Activated B cell treated with CpG ODN at 0.5 μM for 24 hours (primary cell): ENCODE measurements at regions of chr19 and their contacts with region 1.

Region 1: DNA sequence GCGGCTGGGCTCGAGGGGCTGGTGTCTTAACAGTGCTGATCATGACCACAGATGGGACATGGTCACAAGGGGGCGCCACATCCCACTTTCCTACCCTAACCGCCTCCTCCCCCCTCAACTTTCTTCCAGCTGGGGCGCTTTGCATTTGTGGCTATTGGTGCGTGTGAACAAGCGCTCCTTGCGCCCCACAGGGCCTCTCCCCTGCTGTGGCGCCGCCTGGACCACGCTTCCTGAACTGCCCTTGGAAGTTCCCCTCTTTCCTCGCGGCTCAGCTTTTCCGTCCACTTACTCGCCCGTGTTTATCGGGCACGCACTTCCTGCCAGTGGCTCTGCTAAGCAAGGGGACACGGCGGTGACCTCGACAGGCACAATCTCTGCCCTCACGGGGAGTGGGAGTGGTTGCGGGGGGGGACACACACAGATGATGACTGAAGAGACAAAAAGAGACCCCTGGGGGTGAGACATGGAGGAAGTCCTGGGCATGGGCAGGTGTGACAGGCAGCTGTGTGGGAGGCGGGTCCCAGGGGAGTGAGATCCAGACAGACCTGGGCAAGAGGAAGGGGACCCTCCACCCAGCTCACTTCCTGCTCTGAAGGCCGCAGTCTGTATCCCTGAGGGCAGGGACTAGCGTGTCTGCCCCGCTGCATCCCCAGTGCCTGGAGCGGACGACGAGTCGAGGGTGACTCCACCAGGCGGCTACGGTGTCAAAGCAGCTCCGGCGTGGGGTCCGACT is 40.3 kb downstream of the ZNF787 start:
- DNase-seq: peak; percentile 70
- ATAC-seq: peak; percentile 82
- H3K4me3 Mint-ChIP-seq: peak overlapping the region; percentile 84
- H3K27ac Mint-ChIP-seq: peak overlapping the region; percentile 55
- H3K4me1 Mint-ChIP-seq: peaks cover 17% of the 10 kb centered on the region
- H3K27me3 Mint-ChIP-seq: no peaks in the 10 kb centered on the region
- CTCF ChIP-seq: no peak

Region 2: GRCh38 chr19:55766466-55766865 is 314.4 kb before region 1 on chr19:
- CTCF ChIA-PET with region 1: no interaction called
- POLR2A ChIA-PET with region 1: no interaction called
- intact Hi-C with region 1: no loop called
- DNase-seq: no peak
- ATAC-seq: no peak
- H3K4me3 Mint-ChIP-seq: no peak overlapping the region
- H3K27ac Mint-ChIP-seq: no peak overlapping the region
- H3K4me1 Mint-ChIP-seq: no peaks in the 10 kb centered on the region
- H3K27me3 Mint-ChIP-seq: peaks cover 22% of the 10 kb centered on the region
- CTCF ChIP-seq: no peak

Region 3: DNA sequence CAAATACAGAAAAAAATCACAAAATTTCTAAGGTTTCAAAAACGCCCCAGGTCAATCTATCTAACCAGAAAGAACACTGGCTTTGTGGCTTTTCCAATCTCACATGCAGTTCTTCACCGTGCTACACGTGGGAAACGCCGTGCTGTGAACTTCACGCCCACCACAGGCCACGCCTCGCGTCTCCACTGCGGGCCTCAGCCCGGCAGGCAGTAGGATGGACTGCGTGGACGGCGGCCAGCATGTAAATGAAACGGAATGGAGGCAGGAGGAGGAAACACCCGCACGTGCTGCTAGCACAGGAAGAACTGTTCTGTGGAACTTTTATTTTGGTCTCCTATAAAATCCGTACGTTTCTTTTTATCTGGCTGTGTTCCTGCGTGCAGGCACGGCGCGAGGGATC is 16.5 kb after region 1 on chr19:
- CTCF ChIA-PET with region 1: no interaction called
- POLR2A ChIA-PET with region 1: no interaction called
- intact Hi-C with region 1: no loop called
- DNase-seq: no peak
- ATAC-seq: no peak
- H3K4me3 Mint-ChIP-seq: no peak overlapping the region
- H3K27ac Mint-ChIP-seq: no peak overlapping the region
- H3K4me1 Mint-ChIP-seq: no peaks in the 10 kb centered on the region
- H3K27me3 Mint-ChIP-seq: no peaks in the 10 kb centered on the region
- CTCF ChIP-seq: no peak

Region 4: GRCh38 chr19:56111601-56112312 is 30.9 kb after region 1 on chr19:
- CTCF ChIA-PET with region 1: no interaction called
- POLR2A ChIA-PET with region 1: no interaction called
- intact Hi-C with region 1: loop called (anchors 2 kb)
- DNase-seq: peak; percentile 61
- ATAC-seq: peak; percentile 96
- H3K4me3 Mint-ChIP-seq: peak overlapping the region; percentile 77
- H3K27ac Mint-ChIP-seq: peak overlapping the region; percentile 84
- H3K4me1 Mint-ChIP-seq: peaks cover 83% of the 10 kb centered on the region
- H3K27me3 Mint-ChIP-seq: no peaks in the 10 kb centered on the region
- CTCF ChIP-seq: no peak

Region 5: DNA sequence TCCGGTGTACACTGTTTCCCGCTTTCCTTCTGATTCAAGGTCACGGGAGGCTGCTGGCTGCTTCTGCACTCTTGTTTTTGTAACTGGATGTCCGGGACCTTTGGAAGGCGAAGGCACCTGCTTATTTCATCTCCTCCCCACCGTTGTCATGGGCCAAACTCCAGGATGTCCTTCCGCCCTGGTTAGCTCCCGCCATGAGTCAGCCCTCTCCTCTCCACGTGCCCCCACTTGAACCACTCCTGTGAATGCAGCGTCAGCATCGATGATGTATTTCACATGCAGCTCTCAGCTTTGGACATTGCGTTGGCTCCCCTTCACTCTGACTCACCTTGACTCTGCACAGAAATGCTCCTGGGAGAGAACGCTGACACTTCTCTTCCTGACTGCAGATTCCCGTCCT is 89.4 kb after region 1 on chr19:
- CTCF ChIA-PET with region 1: interaction called, 29 read pairs
- POLR2A ChIA-PET with region 1: no interaction called
- intact Hi-C with region 1: loop called (anchors 1 kb)
- DNase-seq: no peak
- ATAC-seq: no peak
- H3K4me3 Mint-ChIP-seq: no peak overlapping the region
- H3K27ac Mint-ChIP-seq: no peak overlapping the region
- H3K4me1 Mint-ChIP-seq: peaks cover 2% of the 10 kb centered on the region
- H3K27me3 Mint-ChIP-seq: peaks cover 3% of the 10 kb centered on the region
- CTCF ChIP-seq: no peak

Region 6: GRCh38 chr19:56333505-56333904 is 252.7 kb after region 1 on chr19:
- CTCF ChIA-PET with region 1: interaction called, 33 read pairs
- POLR2A ChIA-PET with region 1: no interaction called
- intact Hi-C with region 1: loop called (anchors 1 kb)
- DNase-seq: no peak
- ATAC-seq: peak; percentile 73
- H3K4me3 Mint-ChIP-seq: no peak overlapping the region
- H3K27ac Mint-ChIP-seq: no peak overlapping the region
- H3K4me1 Mint-ChIP-seq: no peaks in the 10 kb centered on the region
- H3K27me3 Mint-ChIP-seq: peaks cover 3% of the 10 kb centered on the region
- CTCF ChIP-seq: peak; percentile 36